ENCODE measurements at regions of chr20 and their contacts with region 1.

Region 1: DNA sequence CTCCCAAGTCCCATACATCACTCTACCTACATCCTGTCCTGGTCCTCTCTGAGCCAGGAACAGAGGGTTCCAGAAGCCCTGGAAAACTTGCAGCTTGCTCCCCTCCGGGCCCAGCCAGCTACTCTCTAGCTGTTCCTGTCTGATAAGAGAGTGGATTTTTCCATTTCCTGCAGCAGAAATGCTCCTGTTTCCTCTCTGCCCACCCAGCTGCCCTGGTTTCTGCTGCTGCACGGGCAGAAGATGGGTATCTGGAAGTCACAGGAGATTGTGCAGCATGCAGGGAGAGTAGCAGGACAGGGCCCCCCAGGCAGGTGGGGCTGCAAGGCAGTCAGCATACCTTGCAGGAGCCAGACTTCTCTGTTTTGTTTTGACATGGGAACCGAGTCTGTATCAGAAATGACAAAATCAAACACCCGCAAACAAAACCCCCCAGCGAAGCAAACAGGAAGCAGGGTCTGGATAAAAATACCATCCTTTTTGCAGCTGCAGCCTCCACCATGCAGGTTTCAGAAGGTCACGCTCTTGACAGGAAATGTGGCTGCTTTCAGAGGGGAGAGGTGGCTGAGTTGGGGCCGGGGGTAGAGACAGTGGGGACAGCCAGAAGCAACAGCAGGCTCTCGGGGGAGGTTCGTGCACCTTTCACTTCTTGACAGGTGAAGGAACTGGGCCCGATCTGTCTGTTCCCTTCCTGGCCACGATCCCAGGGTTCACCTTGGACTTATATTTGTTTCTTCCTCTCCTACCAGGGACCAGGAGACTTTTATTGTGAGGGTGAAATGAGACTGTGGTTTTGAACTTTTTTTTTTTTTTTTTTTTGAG is 50.8 kb upstream of the FAM83D start:
- DNase-seq: peak in 8 of 9 donors; percentile 28 to 56 (median 52)
- ATAC-seq: peak; percentile 69
- H3K4me3 ChIP-seq: peak overlapping the region; percentile 46
- H3K4me3 Mint-ChIP-seq: peak overlapping the region; percentile 75 to 94 (median 86)
- H3K27ac ChIP-seq: peak overlapping the region; percentile 65
- H3K27ac Mint-ChIP-seq: peak overlapping the region; percentile 84 to 94 (median 92)
- H3K4me1 ChIP-seq: peaks cover 46 to 66% of the 10 kb centered on the region in 2 donors
- H3K4me1 Mint-ChIP-seq: peaks cover 64 to 91% (median 79%) of the 10 kb centered on the region in 7 donors
- H3K27me3 ChIP-seq: no peaks in the 10 kb centered on the region
- H3K27me3 Mint-ChIP-seq: no peaks in the 10 kb centered on the region

Region 2: DNA sequence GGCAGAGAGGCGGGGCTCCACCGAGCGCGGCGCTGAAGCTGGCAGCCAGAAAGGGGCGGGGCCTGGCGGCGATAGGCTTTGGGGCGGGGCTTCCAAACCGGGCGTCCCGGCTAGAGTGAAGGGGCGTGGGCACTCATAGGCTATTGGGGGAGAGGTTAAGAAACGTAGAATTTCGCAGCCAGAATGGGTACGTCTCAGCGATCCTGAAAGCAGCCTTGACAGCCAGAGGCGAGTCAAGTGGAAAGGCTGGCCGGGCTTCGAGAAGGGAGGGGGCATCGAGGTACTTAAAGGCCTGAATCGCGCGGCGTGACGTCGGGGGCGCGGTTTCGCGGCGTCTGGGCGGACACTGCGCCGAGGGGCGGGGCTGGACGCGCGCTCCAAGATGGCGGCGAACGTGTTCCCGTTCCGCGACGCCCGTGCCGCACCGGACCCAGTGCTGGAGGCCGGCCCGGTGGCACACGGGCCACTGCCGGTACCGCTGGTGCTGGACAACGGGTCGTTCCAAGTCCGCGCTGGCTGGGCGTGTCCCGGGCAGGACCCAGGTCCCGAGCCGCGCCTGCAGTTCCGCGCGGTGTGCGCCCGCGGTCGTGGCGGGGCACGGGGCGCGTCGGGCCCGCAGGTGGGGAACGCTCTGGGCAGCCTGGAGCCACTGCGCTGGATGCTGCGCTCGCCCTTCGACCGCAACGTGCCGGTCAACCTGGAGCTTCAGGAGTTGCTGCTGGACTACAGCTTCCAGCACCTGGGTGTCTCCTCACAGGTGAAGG is 127.1 kb before region 1 on chr20 and contains the start of gene ACTR5:
- CTCF ChIA-PET with region 1: no interaction called
- POLR2A ChIA-PET with region 1: interaction called, 4 read pairs
- intact Hi-C with region 1: loop called in 1 of 2 experiments (anchors 1 kb)
- DNase-seq: peak; percentile 95 to 99 (median 98)
- ATAC-seq: peak; percentile 96
- H3K4me3 ChIP-seq: peak within 1 kb of the TSS; percentile 72
- H3K4me3 Mint-ChIP-seq: peak within 1 kb of the TSS; percentile 95 to 99 (median 97)
- H3K27ac ChIP-seq: peak within 1 kb of the TSS; percentile 95
- H3K27ac Mint-ChIP-seq: peak within 1 kb of the TSS; percentile 93 to 100 (median 99)
- H3K4me1 ChIP-seq: peaks cover 12 to 13% of the 10 kb centered on the region in 2 donors
- H3K4me1 Mint-ChIP-seq: peaks cover 11 to 40% (median 22%) of the 10 kb centered on the region in 7 donors
- H3K27me3 ChIP-seq: no peaks in the 10 kb centered on the region
- H3K27me3 Mint-ChIP-seq: peaks cover 4 to 13% (median 5%) of the 10 kb centered on the region in 5 donors
- total RNA-seq, gene ACTR5: 8.9 to 20.8 (median 15.2) TPM

Region 3: GRCh38 chr20:38842558-38842981 is 32.8 kb before region 1 on chr20:
- CTCF ChIA-PET with region 1: no interaction called
- POLR2A ChIA-PET with region 1: interaction called, 4 read pairs
- intact Hi-C with region 1: loop called (anchors 1 to 5 kb)
- DNase-seq: no peak
- ATAC-seq: peak; percentile 58
- H3K4me3 ChIP-seq: no peak overlapping the region
- H3K4me3 Mint-ChIP-seq: peak overlapping the region; percentile 20 to 74 (median 58)
- H3K27ac ChIP-seq: peak overlapping the region; percentile 64
- H3K27ac Mint-ChIP-seq: peak overlapping the region; percentile 67 to 94 (median 88)
- H3K4me1 ChIP-seq: peaks cover 43 to 72% of the 10 kb centered on the region in 2 donors
- H3K4me1 Mint-ChIP-seq: peaks cover 44 to 80% (median 74%) of the 10 kb centered on the region in 7 donors
- H3K27me3 ChIP-seq: no peaks in the 10 kb centered on the region
- H3K27me3 Mint-ChIP-seq: no peaks in the 10 kb centered on the region

Region 4: DNA sequence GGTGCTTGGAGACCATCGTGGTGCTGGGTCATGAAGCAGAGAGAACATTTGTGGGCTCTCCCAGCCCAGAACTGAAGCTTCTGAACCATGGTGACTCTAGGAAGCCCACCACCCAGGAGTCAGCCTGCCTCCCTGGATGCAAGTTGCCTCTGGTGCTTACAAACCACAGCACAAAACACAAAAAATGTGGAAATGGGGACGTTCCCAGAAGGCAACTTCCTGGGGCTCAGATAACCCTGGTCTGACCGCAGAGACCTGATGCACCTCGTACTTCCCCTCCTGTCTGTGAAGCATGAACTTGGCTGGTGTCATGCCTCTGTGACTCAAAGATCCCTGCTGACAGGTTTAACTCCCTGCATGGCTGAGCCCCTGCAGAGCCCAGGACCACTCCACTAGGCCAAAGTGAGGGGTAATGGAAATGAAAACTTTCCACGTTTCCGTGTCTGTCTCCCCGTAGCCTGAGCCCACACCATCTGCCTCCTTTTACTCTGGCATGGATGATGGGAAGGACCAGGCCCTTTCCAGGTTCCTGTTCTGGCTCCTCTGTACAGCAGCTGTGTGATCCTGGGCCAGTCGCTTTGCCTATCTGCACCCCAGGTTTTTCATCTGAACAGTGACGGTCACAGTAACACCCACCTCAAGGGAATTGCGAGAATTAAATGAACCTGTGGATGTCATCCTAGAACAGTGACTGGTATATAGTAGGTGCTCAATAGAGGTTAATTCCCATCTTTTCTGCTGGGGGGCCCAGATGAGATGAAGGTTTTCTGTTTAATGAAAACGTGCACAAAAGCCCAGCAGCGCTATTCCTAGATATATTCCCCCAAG is 12.1 kb before region 1 on chr20:
- CTCF ChIA-PET with region 1: interaction called, 3 read pairs
- POLR2A ChIA-PET with region 1: interaction called, 3 read pairs
- intact Hi-C with region 1: loop called in 1 of 2 experiments (anchors 1 kb)
- DNase-seq: peak in 1 of 9 donors; percentile 45
- ATAC-seq: peak; percentile 79
- H3K4me3 ChIP-seq: no peak overlapping the region
- H3K4me3 Mint-ChIP-seq: peak overlapping the region in 3 of 10 donors; percentile 8 to 56 (median 10)
- H3K27ac ChIP-seq: no peak overlapping the region
- H3K27ac Mint-ChIP-seq: peak overlapping the region in 6 of 9 donors; percentile 1 to 78 (median 33)
- H3K4me1 ChIP-seq: peaks cover 15 to 29% of the 10 kb centered on the region in 2 donors
- H3K4me1 Mint-ChIP-seq: peaks cover 24 to 64% (median 42%) of the 10 kb centered on the region in 7 donors
- H3K27me3 ChIP-seq: no peaks in the 10 kb centered on the region
- H3K27me3 Mint-ChIP-seq: no peaks in the 10 kb centered on the region

Region 5: GRCh38 chr20:38926142-38926933 is 51.0 kb after region 1 on chr20 and contains the start of gene FAM83D:
- CTCF ChIA-PET with region 1: no interaction called
- POLR2A ChIA-PET with region 1: no interaction called
- intact Hi-C with region 1: loop called in 1 of 2 experiments (anchors 2 kb)
- DNase-seq: peak; percentile 86 to 98 (median 92)
- ATAC-seq: peak; percentile 97
- H3K4me3 ChIP-seq: peak within 1 kb of the TSS; percentile 61
- H3K4me3 Mint-ChIP-seq: peak within 1 kb of the TSS; percentile 76 to 90 (median 80)
- H3K27ac ChIP-seq: peak within 1 kb of the TSS; percentile 64
- H3K27ac Mint-ChIP-seq: peak within 1 kb of the TSS in 8 of 9 donors; percentile 27 to 83 (median 72)
- H3K4me1 ChIP-seq: peaks cover 5 to 22% of the 10 kb centered on the region in 2 donors
- H3K4me1 Mint-ChIP-seq: peaks cover 6 to 43% (median 17%) of the 10 kb centered on the region in 7 donors
- H3K27me3 ChIP-seq: no peaks in the 10 kb centered on the region
- H3K27me3 Mint-ChIP-seq: no peaks in the 10 kb centered on the region
- total RNA-seq, gene FAM83D: 1.4 to 11.1 (median 1.8) TPM

Region 6: DNA sequence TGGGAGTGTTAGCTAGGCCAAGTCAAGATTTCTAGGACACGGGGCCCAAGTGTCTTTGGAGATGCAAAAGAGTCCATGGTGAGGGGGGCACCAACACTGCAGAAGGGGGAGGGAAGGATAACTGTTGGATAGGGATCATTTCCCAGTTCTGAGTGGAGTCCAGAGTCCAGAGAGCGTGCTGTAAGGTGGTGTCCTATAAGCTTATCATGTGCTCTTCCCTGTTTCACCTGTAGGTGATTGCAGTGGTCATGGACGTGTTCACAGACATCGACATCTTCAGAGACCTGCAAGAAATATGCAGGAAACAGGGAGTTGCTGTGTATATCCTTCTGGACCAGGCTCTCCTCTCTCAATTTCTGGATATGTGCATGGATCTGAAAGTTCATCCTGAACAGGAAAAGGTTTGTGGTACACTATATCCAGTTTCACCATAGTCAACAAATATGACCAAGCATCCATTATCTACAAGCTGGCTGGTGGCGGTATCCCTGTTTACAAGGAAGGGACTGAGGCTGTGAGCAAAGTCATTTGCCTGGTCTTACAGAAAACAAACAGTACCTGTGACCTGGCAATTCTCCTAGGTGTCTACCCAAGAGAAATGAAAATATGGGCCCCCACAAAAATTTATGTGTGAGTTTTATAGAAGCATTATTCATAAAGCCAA is 66.5 kb after region 1 on chr20:
- CTCF ChIA-PET with region 1: no interaction called
- POLR2A ChIA-PET with region 1: no interaction called
- intact Hi-C with region 1: no loop called
- DNase-seq: no peak
- ATAC-seq: no peak
- H3K4me3 ChIP-seq: no peak overlapping the region
- H3K4me3 Mint-ChIP-seq: no peak overlapping the region
- H3K27ac ChIP-seq: no peak overlapping the region
- H3K27ac Mint-ChIP-seq: no peak overlapping the region
- H3K4me1 ChIP-seq: no peaks in the 10 kb centered on the region
- H3K4me1 Mint-ChIP-seq: peaks cover 0 to 17% (median 0%) of the 10 kb centered on the region in 7 donors
- H3K27me3 ChIP-seq: no peaks in the 10 kb centered on the region
- H3K27me3 Mint-ChIP-seq: no peaks in the 10 kb centered on the region

Measured in naive thymus-derived CD4-positive, alpha-beta T cell (primary cell).